Activated CD8-positive, alpha-beta T cell treated with anti-CD3 and anti-CD28 coated beads, Interleukin-2, amount 10 ng/mL, durations not matched to agents 7 days and 5 days (primary cell): ENCODE measurements at regions of chr17 and their contacts with region 1.

Region 1: GRCh38 chr17:75059369-75060345 is 12.6 kb downstream of the KCTD2 start:
- DNase-seq: no peak
- ATAC-seq: no peak
- H3K4me3 Mint-ChIP-seq: no peak overlapping the region
- H3K27ac Mint-ChIP-seq: no peak overlapping the region
- H3K4me1 Mint-ChIP-seq: peaks cover 18% of the 10 kb centered on the region
- H3K27me3 Mint-ChIP-seq: no peaks in the 10 kb centered on the region

Region 2: DNA sequence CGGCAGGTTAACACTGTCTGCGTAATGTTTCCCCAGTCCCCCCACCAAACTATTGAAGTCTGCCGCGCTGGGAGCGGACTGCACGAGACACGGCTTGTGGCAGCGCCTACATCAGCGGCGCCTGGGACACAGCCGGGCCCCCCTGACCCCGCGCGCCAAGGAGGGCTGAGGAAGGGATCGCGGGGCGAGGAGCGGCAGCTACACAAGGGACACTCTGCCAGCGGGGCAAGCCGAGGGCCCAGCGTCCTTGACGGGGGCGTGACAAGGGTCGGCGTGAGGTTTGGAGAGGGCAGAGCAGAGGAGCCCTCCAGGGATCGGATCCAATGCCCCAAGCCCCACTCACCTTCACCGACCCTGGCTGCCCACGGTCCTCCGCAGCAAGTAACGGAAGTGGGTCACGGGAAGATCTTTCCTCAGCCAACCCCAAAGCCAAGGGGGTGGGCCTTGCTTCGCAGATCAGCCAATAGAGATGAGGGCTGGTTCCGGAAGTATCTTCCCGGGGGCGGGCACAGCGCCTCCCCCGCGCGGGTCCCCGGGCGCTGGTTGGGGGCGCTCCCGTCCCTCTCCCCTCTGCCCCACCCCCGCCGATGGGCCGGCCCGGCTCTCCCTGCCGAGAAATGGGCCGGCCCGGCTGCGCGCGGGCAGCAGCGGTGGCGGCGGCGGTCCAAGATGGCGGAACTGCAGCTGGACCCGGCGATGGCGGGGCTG is 12.9 kb before region 1 on chr17 and contains the starts of genes ATP5PD and KCTD2:
- CTCF ChIA-PET with region 1: interaction called, 13 read pairs
- POLR2A ChIA-PET with region 1: interaction called, 4 read pairs
- DNase-seq: peak; percentile 97
- ATAC-seq: peak; percentile 96
- H3K4me3 Mint-ChIP-seq: peak within 1 kb of the TSS; percentile 98
- H3K27ac Mint-ChIP-seq: peak within 1 kb of the TSS; percentile 91
- H3K4me1 Mint-ChIP-seq: peaks cover 43% of the 10 kb centered on the region
- H3K27me3 Mint-ChIP-seq: no peaks in the 10 kb centered on the region
- total RNA-seq, gene ATP5PD: 232 to 238 TPM
- total RNA-seq, gene KCTD2: 15.6 to 19.4 TPM

Region 3: DNA sequence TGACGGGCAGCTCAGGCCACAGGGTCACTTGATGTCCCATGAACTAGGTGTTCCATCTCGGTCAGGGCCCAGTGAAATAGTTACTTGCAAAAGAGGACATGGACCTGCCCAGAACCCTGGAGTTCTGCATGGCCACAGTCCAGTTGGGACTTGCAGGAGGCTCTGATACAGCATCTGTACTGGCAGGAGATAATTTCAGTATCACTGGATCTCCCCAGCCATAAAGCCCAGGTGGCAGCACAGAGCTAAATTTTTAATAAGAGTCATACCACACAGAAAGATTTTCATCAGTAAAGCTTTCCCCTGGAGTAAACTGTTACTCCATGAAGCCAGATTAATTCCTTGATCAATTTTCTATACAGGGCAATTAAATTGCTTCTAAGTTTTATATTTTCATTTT is 10.1 kb after region 1 on chr17:
- CTCF ChIA-PET with region 1: interaction called, 11 read pairs
- POLR2A ChIA-PET with region 1: no interaction called
- DNase-seq: no peak
- ATAC-seq: no peak
- H3K4me3 Mint-ChIP-seq: no peak overlapping the region
- H3K27ac Mint-ChIP-seq: peak overlapping the region; percentile 68
- H3K4me1 Mint-ChIP-seq: peaks cover 38% of the 10 kb centered on the region
- H3K27me3 Mint-ChIP-seq: no peaks in the 10 kb centered on the region